ENCODE measurements at regions of chr20 and their contacts with region 1.

Region 1: DNA sequence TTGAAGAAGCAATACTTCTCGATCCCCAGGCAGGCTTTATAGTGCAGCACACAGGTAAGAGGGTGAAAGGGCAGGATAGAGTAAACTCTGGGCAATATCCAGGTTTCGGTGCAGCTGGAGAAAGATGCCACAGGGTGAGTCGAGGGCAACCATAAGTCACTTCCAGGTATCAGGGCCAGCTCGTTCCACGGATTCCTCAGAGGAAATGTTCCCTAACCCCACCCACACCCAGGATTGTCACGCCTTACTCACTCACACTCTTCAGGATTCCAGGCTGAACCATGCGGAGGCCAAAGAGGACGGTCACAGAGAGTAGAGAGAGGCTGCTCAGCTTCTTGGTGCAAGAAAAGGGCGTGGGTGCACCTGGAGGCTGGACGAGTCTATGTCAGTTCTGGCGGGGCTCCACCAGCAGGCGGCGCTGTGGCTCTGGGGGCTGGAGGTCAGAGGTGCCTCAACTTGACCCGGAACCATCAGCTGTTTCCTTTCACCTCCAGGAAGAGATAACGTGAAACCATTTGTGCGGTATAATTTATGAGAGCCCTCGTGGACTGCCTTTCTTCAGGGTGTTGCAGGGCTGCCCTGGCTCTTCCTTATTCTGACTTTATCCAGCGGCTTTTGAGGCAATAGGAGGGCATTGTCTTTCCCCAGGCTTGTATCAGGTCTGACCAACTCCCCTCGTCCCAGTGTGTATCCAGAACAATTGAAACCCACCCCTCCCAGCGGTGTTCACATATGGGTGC is 14.5 kb upstream of the WFDC12 start:
- DNase-seq: no peak
- ATAC-seq: peak; percentile 83
- H3K4me3 ChIP-seq: no peak overlapping the region
- H3K27ac ChIP-seq: no peak overlapping the region
- H3K4me1 ChIP-seq: no peaks in the 10 kb centered on the region
- H3K27me3 ChIP-seq: peaks cover 3% of the 10 kb centered on the region; the same call in 1 of the 2 replicates
- CTCF ChIP-seq: peak; percentile 88

Region 2: GRCh38 chr20:45032781-45033180 is 106.0 kb before region 1 on chr20:
- CTCF ChIA-PET with region 1: no interaction called
- POLR2A ChIA-PET with region 1: no interaction called
- in situ Hi-C with region 1: no loop called
- intact Hi-C with region 1: no loop called
- DNase-seq: no peak
- ATAC-seq: no peak
- H3K4me3 ChIP-seq: no peak overlapping the region
- H3K27ac ChIP-seq: no peak overlapping the region
- H3K4me1 ChIP-seq: no peaks in the 10 kb centered on the region; the same call in 1 of the 2 replicates
- H3K27me3 ChIP-seq: no peaks in the 10 kb centered on the region
- CTCF ChIP-seq: no peak

Region 3: GRCh38 chr20:45253260-45253659 is 114.5 kb after region 1 on chr20:
- CTCF ChIA-PET with region 1: no interaction called
- POLR2A ChIA-PET with region 1: interaction called, 10 read pairs
- in situ Hi-C with region 1: no loop called
- intact Hi-C with region 1: no loop called
- DNase-seq: no peak
- ATAC-seq: no peak
- H3K4me3 ChIP-seq: no peak overlapping the region
- H3K27ac ChIP-seq: no peak overlapping the region
- H3K4me1 ChIP-seq: no peaks in the 10 kb centered on the region
- H3K27me3 ChIP-seq: peaks cover 20% of the 10 kb centered on the region
- CTCF ChIP-seq: no peak

Region 4: GRCh38 chr20:45283548-45284057 is 144.9 kb after region 1 on chr20:
- CTCF ChIA-PET with region 1: no interaction called
- POLR2A ChIA-PET with region 1: no interaction called
- in situ Hi-C with region 1: no loop called
- intact Hi-C with region 1: loop called (anchors 10 kb)
- DNase-seq: no peak
- ATAC-seq: no peak
- H3K4me3 ChIP-seq: no peak overlapping the region
- H3K27ac ChIP-seq: no peak overlapping the region
- H3K4me1 ChIP-seq: no peaks in the 10 kb centered on the region
- H3K27me3 ChIP-seq: peaks cover 2% of the 10 kb centered on the region; the same call in 1 of the 2 replicates
- CTCF ChIP-seq: no peak